Transverse colon (tissue), 4 donors: ENCODE measurements at regions of chr2 and their contacts with region 1.

Region 1: DNA sequence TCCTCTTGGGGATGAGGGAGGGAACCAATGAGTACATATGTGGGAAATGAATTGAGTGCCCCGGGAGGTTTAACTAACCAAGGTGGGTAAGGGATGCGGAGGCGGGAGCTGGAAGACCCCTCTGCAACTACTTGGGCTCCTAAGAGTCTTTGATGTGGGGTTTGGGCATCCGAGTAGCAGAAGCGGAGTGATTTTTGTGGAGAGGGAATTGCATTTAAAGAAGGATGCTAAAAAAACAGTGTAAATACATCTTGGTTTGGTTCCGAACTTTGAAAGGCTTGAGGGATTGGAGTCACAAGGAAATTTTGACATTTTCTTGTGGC is 215.7 kb downstream of the MCFD2 start:
- DNase-seq: no peak
- H3K4me3 ChIP-seq: peak overlapping the region; percentile 84 to 91 (median 89)
- H3K27ac ChIP-seq: peak overlapping the region; percentile 95 to 98 (median 96)
- H3K4me1 ChIP-seq: peaks cover 8 to 41% (median 32%) of the 10 kb centered on the region in 4 donors
- H3K27me3 ChIP-seq: no peaks in the 10 kb centered on the region
- CTCF ChIP-seq: no peak
- EP300 ChIP-seq: no peak
- POLR2A ChIP-seq: no peak

Region 2: GRCh38 chr2:46850777-46851176 is 150.9 kb after region 1 on chr2:
- in situ Hi-C with region 1: no loop called
- intact Hi-C with region 1: loop called (anchors 10 kb)
- DNase-seq: peak; percentile 45
- H3K4me3 ChIP-seq: no peak overlapping the region
- H3K27ac ChIP-seq: peak overlapping the region; percentile 91 to 95 (median 92)
- H3K4me1 ChIP-seq: peaks cover 52 to 62% (median 58%) of the 10 kb centered on the region in 4 donors
- H3K27me3 ChIP-seq: no peaks in the 10 kb centered on the region
- CTCF ChIP-seq: peak in 1 of 5 experiments; percentile 8
- EP300 ChIP-seq: no peak
- POLR2A ChIP-seq: no peak